ENCODE measurements at regions of chr4 and their contacts with region 1.

Region 1: DNA sequence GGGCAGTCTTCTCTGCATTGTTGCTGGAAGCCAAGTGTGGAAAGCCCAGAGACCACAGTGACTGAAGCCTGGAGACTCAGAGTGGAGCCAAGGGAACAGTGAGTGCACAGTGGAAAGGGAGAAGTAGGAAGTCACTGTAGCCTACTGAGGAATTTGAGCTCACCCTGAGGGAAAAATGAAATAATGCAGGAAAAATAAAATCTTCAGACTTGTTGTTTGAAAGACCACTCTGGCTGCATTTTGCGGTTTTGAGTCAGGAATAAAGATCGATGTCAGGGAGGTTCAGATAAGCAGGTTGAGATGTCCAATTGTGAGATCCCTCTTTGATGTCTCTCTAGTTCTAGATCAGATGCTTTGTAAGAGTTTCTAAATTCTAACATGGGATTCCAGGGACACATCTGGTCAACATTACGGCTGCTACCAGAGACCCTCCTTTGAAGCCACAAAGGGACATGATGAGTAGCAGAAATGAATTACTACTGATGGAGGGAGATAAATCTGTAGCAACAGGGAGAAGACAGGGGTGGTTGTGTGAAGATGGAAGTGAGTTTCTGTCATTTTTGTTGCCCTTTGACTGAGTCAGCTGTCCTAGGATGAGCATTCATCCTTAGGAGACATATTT is 8.4 kb downstream of the ADH4 start:
- DNase-seq: no peak
- H3K4me3 ChIP-seq: no peak overlapping the region
- H3K27ac ChIP-seq: no peak overlapping the region
- H3K4me1 ChIP-seq: no peaks in the 10 kb centered on the region
- H3K27me3 ChIP-seq: no peaks in the 10 kb centered on the region
- CTCF ChIP-seq: no peak
- POLR2A ChIP-seq: no peak

Region 2: GRCh38 chr4:99078931-99079624 is 56.6 kb before region 1 on chr4:
- intact Hi-C with region 1: no loop called
- DNase-seq: no peak
- H3K4me3 ChIP-seq: no peak overlapping the region
- H3K27ac ChIP-seq: no peak overlapping the region
- H3K4me1 ChIP-seq: no peaks in the 10 kb centered on the region
- H3K27me3 ChIP-seq: no peaks in the 10 kb centered on the region
- CTCF ChIP-seq: no peak
- POLR2A ChIP-seq: no peak

Region 3: DNA sequence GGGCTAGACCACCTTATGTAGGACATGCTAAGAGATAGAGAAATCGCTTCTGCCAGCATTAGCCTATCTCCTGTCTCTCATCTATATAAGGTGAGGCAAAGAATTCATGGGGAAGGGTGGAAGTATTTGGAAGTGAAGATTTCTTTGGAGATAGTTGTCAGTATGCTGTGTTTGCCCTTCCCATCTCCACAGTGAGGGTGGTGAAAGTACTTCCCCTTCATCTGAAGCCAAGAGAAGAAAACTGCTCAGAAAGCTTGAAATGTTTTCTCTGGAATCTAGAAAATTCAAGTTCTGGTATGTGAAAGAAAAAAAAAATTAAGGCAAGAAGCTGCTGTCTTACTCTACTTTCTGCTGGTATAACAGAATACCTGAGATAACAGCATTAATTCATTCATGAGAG is 34.8 kb before region 1 on chr4:
- intact Hi-C with region 1: no loop called
- DNase-seq: no peak
- H3K4me3 ChIP-seq: no peak overlapping the region
- H3K27ac ChIP-seq: no peak overlapping the region
- H3K4me1 ChIP-seq: no peaks in the 10 kb centered on the region
- H3K27me3 ChIP-seq: no peaks in the 10 kb centered on the region
- CTCF ChIP-seq: no peak
- POLR2A ChIP-seq: no peak

Region 4: DNA sequence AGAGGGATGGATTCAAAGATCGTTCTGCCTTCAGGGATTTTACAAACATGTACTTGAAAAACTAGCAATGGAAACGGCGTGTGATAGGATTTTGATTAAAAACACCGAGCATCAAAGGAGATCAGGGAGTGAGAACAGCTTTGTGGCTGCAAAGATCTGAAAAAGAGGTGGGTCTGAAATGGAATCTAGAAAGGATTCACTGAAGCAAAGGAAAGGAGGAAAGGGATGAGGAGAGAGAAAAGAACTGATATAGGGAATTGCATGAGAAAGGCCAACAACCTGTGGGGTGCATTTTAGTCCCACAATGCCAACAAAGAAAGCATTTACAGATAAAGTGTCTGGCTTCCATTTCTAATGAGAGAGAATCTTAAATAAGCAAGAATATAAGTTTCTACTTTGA is 14.6 kb before region 1 on chr4:
- intact Hi-C with region 1: no loop called
- DNase-seq: no peak
- H3K4me3 ChIP-seq: no peak overlapping the region
- H3K27ac ChIP-seq: no peak overlapping the region
- H3K4me1 ChIP-seq: no peaks in the 10 kb centered on the region
- H3K27me3 ChIP-seq: no peaks in the 10 kb centered on the region
- CTCF ChIP-seq: no peak
- POLR2A ChIP-seq: no peak

Region 5: DNA sequence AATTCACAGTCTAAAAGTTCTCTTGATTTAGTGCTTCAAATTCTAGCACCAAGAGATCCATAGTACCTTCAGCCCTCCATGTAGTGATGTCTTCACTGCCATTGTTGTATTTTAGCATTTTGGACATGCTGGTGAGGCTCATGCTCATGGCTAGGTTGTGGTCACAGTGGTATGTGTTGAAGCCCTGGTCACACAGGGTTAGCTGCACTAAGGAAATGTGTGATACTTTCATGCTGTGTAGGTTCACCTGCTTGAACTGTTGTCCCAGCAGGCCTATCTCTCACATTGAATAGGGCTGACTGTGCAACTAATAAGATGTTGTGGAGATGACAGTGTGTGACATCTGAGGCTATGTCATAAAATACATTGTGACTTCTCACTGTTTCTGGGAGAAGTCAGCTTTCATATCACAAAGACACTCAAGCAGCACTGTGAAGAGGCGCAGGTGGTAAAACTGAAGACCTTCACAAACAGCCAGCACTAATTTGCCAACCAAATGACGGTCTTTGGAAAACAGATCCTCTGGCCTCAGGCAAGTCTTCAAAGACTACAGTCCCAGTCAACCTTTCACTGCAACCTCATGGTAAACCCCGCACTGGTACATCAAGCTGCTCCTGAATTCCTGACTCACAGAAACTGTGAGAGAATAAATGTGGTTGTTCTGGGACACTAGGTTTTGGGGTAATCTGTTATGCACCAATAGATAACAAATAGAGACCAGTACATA is 25.9 kb after region 1 on chr4:
- intact Hi-C with region 1: loop called (anchors 1 kb)
- DNase-seq: no peak
- H3K4me3 ChIP-seq: no peak overlapping the region
- H3K27ac ChIP-seq: no peak overlapping the region
- H3K4me1 ChIP-seq: no peaks in the 10 kb centered on the region
- H3K27me3 ChIP-seq: no peaks in the 10 kb centered on the region
- CTCF ChIP-seq: no peak
- POLR2A ChIP-seq: no peak

Region 6: DNA sequence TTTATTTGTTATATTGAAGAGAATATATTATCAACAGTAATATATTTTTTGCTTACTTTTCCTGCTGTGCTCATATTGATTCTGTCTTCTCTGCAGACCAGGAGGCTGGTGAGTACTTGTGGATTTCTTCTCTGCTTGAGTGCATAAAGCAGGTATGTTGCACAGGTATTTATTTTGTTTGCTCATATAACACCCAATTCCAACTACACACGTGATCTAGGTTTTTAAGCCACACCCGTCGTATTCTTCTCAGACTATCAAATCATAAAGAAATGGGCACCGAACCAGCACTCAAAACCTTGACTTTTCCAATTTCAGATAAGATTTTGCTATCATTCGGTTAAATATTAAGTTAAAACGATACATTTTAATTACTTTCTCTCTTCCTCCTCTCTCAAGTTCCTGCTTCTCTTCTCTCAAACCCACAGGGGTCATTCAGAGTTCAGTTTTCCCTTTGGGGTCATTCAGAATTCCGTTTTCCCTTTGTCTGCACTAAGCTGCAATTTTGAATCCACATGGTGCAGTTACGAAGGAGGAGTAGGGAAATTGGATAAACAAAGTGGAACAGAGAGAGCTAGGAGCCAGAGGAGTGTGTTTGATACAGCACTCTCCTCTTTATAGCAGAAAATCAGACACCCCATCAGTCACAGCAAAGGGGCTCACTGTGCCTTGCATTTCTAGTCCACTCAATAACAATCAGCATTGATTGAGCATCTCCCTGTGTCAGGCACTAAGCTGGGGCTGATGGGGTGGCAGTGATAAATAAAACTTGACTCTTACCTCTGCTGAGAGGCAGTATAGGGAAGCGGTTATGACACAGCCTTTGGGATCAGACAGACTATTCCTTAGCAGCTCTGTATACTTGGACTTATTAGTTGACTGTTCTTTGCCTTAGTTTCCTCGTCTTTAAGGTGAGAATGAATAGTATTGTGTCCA is 217.2 kb after region 1 on chr4 and contains the start of gene ADH1C:
- intact Hi-C with region 1: no loop called
- DNase-seq: no peak
- H3K4me3 ChIP-seq: peak within 1 kb of the TSS; percentile 7 to 36 (median 18)
- H3K27ac ChIP-seq: peak within 1 kb of the TSS; percentile 41 to 81
- H3K4me1 ChIP-seq: no peaks in the 10 kb centered on the region
- H3K27me3 ChIP-seq: no peaks in the 10 kb centered on the region
- CTCF ChIP-seq: no peak
- POLR2A ChIP-seq: no peak
- total RNA-seq, gene ADH1C: 8.8 to 50.1 (median 31.8) TPM